GM23248 (cell line): ENCODE measurements at regions of chr16 and their contacts with region 1.

Region 1: GRCh38 chr16:55949518-55949917 is 74.3 kb upstream of the CES5A start:
- DNase-seq: peak; percentile 56
- H3K4me3 ChIP-seq: no peak overlapping the region
- H3K27ac ChIP-seq: no peak overlapping the region
- H3K4me1 ChIP-seq: no peaks in the 10 kb centered on the region
- H3K27me3 ChIP-seq: no peaks in the 10 kb centered on the region; the same call in 1 of the 2 replicates

Region 2: DNA sequence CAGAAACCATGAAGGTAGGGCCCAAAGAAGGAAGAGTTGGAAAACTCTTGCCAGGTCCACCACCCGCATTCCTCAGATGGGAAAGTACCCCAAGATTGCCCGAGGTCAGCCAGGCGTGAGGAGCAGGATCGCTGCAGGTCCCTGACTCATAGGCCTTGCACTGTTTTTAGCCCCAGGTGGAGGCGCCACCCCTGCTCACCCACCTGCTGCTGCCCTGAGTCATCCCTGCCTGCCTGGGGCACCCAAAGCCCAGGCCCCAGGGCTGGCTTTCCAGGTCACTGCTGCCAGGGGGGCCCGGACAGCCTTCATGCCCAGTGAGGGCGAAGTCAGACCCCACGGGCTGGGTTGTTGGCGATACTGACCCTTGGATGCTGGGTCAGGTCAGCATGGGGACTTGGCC is 374.9 kb after region 1 on chr16:
- in situ Hi-C with region 1: loop called (anchors 5 kb)
- DNase-seq: no peak
- H3K4me3 ChIP-seq: no peak overlapping the region
- H3K27ac ChIP-seq: no peak overlapping the region
- H3K4me1 ChIP-seq: no peaks in the 10 kb centered on the region
- H3K27me3 ChIP-seq: no peaks in the 10 kb centered on the region